CD4-positive, alpha-beta memory T cell (primary cell): ENCODE measurements at regions of chr21 and their contacts with region 1.

Region 1: GRCh38 chr21:36156339-36156814 is 247 bp upstream of the DOP1B start:
- DNase-seq: peak; percentile 99 to 100 (median 100)
- H3K4me3 ChIP-seq: peak overlapping the region; percentile 63 to 70
- H3K4me3 Mint-ChIP-seq: peak overlapping the region; percentile 79 to 92 (median 86)
- H3K27ac ChIP-seq: peak overlapping the region; percentile 64
- H3K27ac Mint-ChIP-seq: peak overlapping the region; percentile 36 to 87 (median 60)
- H3K4me1 ChIP-seq: peaks cover 26% of the 10 kb centered on the region
- H3K4me1 Mint-ChIP-seq: peaks cover 23 to 57% (median 34%) of the 10 kb centered on the region in 4 donors
- H3K27me3 ChIP-seq: no peaks in the 10 kb centered on the region
- H3K27me3 Mint-ChIP-seq: no peaks in the 10 kb centered on the region

Region 2: DNA sequence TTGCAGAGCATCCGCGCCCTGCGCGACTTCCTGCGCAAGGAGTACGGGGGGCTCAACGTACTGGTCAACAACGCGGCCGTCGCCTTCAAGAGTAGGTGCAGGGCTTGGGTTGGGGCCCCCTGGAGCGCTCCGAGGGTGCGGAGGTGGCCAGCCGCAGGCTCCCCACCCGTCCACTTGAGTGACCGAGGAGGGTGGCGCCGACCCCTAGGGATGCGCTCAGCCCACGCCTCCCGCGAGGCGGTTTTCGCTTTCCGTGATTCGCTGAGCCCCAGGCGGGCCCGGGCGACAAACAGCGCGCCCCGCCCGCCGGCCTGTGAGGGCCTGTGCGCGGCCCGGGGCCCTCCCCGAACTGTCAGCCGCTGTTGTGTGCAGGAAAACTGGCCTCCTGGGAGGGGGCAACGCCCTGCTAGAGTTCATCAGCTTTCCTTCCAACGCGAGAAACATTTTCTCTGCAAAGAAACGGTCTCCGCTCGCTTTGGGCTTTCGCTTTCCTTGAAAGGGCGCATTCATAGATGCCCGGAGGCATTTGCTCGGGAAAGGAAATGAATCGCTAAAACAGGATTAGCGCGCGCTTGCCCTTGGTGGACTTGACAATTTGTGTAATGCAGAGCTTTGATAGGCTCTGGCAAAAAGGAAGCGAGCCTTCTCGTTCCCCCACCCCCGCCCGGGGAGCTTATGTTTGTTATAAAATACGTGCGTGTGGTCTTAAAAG is 20.8 kb before region 1 on chr21:
- CTCF ChIA-PET with region 1: interaction called, 133 read pairs
- POLR2A ChIA-PET with region 1: interaction called, 15 read pairs
- intact Hi-C with region 1: loop called (anchors 1 kb)
- DNase-seq: peak in 4 of 5 donors; percentile 49 to 61 (median 53)
- H3K4me3 ChIP-seq: peak overlapping the region; percentile 58 to 86
- H3K4me3 Mint-ChIP-seq: peak overlapping the region; percentile 89 to 96 (median 95)
- H3K27ac ChIP-seq: peak overlapping the region; percentile 51
- H3K27ac Mint-ChIP-seq: peak overlapping the region; percentile 86 to 95 (median 92)
- H3K4me1 ChIP-seq: peaks cover 25% of the 10 kb centered on the region
- H3K4me1 Mint-ChIP-seq: peaks cover 12 to 35% (median 21%) of the 10 kb centered on the region in 4 donors
- H3K27me3 ChIP-seq: no peaks in the 10 kb centered on the region
- H3K27me3 Mint-ChIP-seq: no peaks in the 10 kb centered on the region

Region 3: GRCh38 chr21:36174780-36175179 is 18.4 kb after region 1 on chr21:
- CTCF ChIA-PET with region 1: interaction called, 83 read pairs
- POLR2A ChIA-PET with region 1: interaction called, 28 read pairs
- intact Hi-C with region 1: loop called (anchors 1 kb)
- DNase-seq: no peak
- H3K4me3 ChIP-seq: no peak overlapping the region
- H3K4me3 Mint-ChIP-seq: peak overlapping the region in 2 of 8 donors; percentile 13 to 52
- H3K27ac ChIP-seq: no peak overlapping the region
- H3K27ac Mint-ChIP-seq: peak overlapping the region in 5 of 7 donors; percentile 10 to 85 (median 36)
- H3K4me1 ChIP-seq: peaks cover 18% of the 10 kb centered on the region
- H3K4me1 Mint-ChIP-seq: peaks cover 10 to 23% (median 13%) of the 10 kb centered on the region in 4 donors
- H3K27me3 ChIP-seq: no peaks in the 10 kb centered on the region
- H3K27me3 Mint-ChIP-seq: no peaks in the 10 kb centered on the region

Region 4: DNA sequence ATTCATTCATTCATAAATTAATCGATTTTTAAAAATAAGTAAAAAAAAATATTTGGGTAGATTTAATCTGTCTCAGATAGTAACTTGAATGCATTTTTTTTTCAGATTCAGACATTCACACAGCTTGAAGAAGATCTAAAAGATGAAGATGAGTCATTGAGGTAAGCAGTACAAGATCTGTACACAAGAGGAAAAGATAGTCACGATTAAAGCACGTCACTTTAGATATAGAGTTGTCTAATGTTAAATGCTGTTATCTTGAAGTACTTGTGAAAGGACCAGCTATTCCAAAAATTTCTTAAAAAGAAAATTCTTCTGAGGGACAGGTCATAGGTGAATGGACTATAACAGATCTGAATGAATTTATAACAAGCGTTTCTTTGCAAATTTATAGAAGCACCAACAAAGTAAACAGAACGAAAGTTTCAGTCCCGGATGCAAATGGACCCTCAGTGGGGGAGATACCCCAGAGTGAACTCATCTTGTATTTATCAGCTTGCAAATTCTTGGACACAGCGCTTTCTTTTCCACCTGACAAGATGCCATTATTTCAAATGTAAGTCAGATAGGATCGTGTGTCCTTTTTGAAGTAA is 132.4 kb after region 1 on chr21:
- CTCF ChIA-PET with region 1: interaction called, 3 read pairs
- POLR2A ChIA-PET with region 1: interaction called, 5 read pairs
- intact Hi-C with region 1: loop called (anchors 1 kb)
- DNase-seq: peak in 4 of 5 donors; percentile 59 to 72 (median 62)
- H3K4me3 ChIP-seq: peak overlapping the region in 1 of 2 donors; percentile 11
- H3K4me3 Mint-ChIP-seq: peak overlapping the region; percentile 65 to 89 (median 80)
- H3K27ac ChIP-seq: peak overlapping the region; percentile 77
- H3K27ac Mint-ChIP-seq: peak overlapping the region; percentile 95 to 99 (median 96)
- H3K4me1 ChIP-seq: peaks cover 26% of the 10 kb centered on the region
- H3K4me1 Mint-ChIP-seq: peaks cover 18 to 29% (median 24%) of the 10 kb centered on the region in 4 donors
- H3K27me3 ChIP-seq: no peaks in the 10 kb centered on the region
- H3K27me3 Mint-ChIP-seq: peaks cover 0 to 1% of the 10 kb centered on the region in 2 donors

Region 5: GRCh38 chr21:36385233-36386030 is 229.1 kb after region 1 on chr21 and contains the start of gene CHAF1B:
- CTCF ChIA-PET with region 1: no interaction called
- POLR2A ChIA-PET with region 1: no interaction called
- intact Hi-C with region 1: loop called (anchors 1 kb)
- DNase-seq: peak; percentile 72 to 88 (median 82)
- H3K4me3 ChIP-seq: peak within 1 kb of the TSS; percentile 48 to 66
- H3K4me3 Mint-ChIP-seq: peak within 1 kb of the TSS; percentile 81 to 90 (median 84)
- H3K27ac ChIP-seq: peak within 1 kb of the TSS; percentile 56
- H3K27ac Mint-ChIP-seq: peak within 1 kb of the TSS in 6 of 7 donors; percentile 72 to 86 (median 78)
- H3K4me1 ChIP-seq: peaks cover 11% of the 10 kb centered on the region
- H3K4me1 Mint-ChIP-seq: peaks cover 7 to 15% (median 9%) of the 10 kb centered on the region in 4 donors
- H3K27me3 ChIP-seq: no peaks in the 10 kb centered on the region
- H3K27me3 Mint-ChIP-seq: no peaks in the 10 kb centered on the region
- total RNA-seq, gene CHAF1B: 1.3 to 1.6 TPM